Activated CD8-positive, alpha-beta T cell treated with anti-CD3 and anti-CD28 coated beads for 36 hours (primary cell): ENCODE measurements at regions of chr2 and their contacts with region 1.

Region 1: GRCh38 chr2:170928824-170929685 is at the start of gene GORASP2:
- DNase-seq: peak; percentile 100
- ATAC-seq: peak; percentile 93
- H3K4me3 Mint-ChIP-seq: peak within 1 kb of the TSS; percentile 99
- H3K27ac Mint-ChIP-seq: peak within 1 kb of the TSS; percentile 99
- H3K4me1 Mint-ChIP-seq: peaks cover 45% of the 10 kb centered on the region
- H3K27me3 Mint-ChIP-seq: no peaks in the 10 kb centered on the region
- CTCF ChIP-seq: peak; percentile 96
- total RNA-seq, gene GORASP2: 68.4 to 70.6 TPM

Region 2: GRCh38 chr2:170940066-170940465 is 11.0 kb after region 1 on chr2:
- CTCF ChIA-PET with region 1: interaction called, 33 read pairs
- POLR2A ChIA-PET with region 1: interaction called, 9 read pairs
- intact Hi-C with region 1: no loop called
- DNase-seq: no peak
- ATAC-seq: no peak
- H3K4me3 Mint-ChIP-seq: no peak overlapping the region
- H3K27ac Mint-ChIP-seq: no peak overlapping the region
- H3K4me1 Mint-ChIP-seq: peaks cover 75% of the 10 kb centered on the region
- H3K27me3 Mint-ChIP-seq: no peaks in the 10 kb centered on the region
- CTCF ChIP-seq: no peak

Region 3: GRCh38 chr2:170950221-170950761 is 21.2 kb after region 1 on chr2:
- CTCF ChIA-PET with region 1: interaction called, 33 read pairs
- POLR2A ChIA-PET with region 1: interaction called, 5 read pairs
- intact Hi-C with region 1: no loop called
- DNase-seq: no peak
- ATAC-seq: no peak
- H3K4me3 Mint-ChIP-seq: no peak overlapping the region
- H3K27ac Mint-ChIP-seq: no peak overlapping the region
- H3K4me1 Mint-ChIP-seq: peaks cover 9% of the 10 kb centered on the region
- H3K27me3 Mint-ChIP-seq: no peaks in the 10 kb centered on the region
- CTCF ChIP-seq: no peak

Region 4: GRCh38 chr2:171069286-171069956 is 140.4 kb after region 1 on chr2:
- CTCF ChIA-PET with region 1: no interaction called
- POLR2A ChIA-PET with region 1: no interaction called
- intact Hi-C with region 1: no loop called
- DNase-seq: no peak
- ATAC-seq: no peak
- H3K4me3 Mint-ChIP-seq: no peak overlapping the region
- H3K27ac Mint-ChIP-seq: no peak overlapping the region
- H3K4me1 Mint-ChIP-seq: peaks cover 12% of the 10 kb centered on the region
- H3K27me3 Mint-ChIP-seq: no peaks in the 10 kb centered on the region
- CTCF ChIP-seq: no peak

Region 5: DNA sequence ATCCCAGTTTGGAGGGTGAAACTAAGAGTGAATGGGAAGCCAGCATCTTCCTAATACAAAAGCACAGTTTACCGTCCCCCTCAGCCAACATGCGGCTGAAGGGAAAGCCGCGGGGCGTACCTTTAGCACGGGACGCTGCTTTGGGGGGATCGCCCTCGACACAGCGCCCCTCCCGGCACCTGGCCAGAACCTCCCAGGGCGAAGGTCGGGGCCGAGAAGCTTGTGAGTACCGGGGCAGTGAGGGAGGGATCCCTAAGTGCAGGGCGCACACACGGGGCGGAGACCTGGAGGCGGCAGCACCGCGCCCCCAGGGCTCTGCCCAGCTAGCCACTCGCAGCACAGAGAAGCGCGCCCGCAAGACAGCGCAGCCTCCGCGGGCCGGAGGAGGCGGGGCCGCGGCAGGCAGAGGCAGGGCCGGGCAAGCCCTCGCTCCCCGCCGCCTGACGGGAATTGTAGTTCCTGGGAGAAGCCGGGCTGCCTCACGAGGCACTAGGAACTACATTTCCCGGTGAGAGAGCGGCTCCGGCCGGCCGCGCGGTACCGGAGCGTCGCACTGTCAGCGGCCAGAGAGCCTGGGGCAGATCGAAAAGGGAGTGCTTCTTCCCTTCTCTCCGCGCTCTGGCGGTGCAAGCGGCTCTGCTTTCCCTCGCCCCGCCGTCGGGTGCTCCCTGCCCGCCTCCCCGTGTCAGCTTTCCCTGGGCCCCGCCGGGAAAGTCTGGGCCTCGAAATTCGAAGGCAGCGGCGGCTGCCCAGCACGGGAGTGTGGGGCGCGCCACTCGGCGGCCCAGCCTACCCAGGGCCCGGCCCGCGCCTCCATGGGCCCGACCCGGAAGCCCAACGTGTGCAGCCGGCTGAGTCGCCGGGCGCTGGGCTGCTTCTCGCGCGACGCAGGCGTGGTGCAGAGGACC is 505.0 kb after region 1 on chr2 and contains the starts of genes DCAF17 and METTL8:
- CTCF ChIA-PET with region 1: interaction called, 3 read pairs
- POLR2A ChIA-PET with region 1: interaction called, 11 read pairs
- intact Hi-C with region 1: no loop called
- DNase-seq: peak; percentile 95
- ATAC-seq: peak; percentile 93
- H3K4me3 Mint-ChIP-seq: peak within 1 kb of the TSS; percentile 91
- H3K27ac Mint-ChIP-seq: peak within 1 kb of the TSS; percentile 95
- H3K4me1 Mint-ChIP-seq: peaks cover 46% of the 10 kb centered on the region
- H3K27me3 Mint-ChIP-seq: no peaks in the 10 kb centered on the region
- CTCF ChIP-seq: peak; percentile 48
- total RNA-seq, gene DCAF17: 19.0 to 20.1 TPM
- total RNA-seq, gene METTL8: 43.4 to 44.8 TPM